ENCODE measurements at regions of chr17 and their contacts with region 1.

Region 1: GRCh38 chr17:76014184-76014924 is 12.8 kb downstream of the EVPL start:
- DNase-seq: peak; percentile 94
- H3K4me3 Mint-ChIP-seq: no peak overlapping the region
- H3K27ac Mint-ChIP-seq: no peak overlapping the region
- H3K4me1 Mint-ChIP-seq: peaks cover 4% of the 10 kb centered on the region
- H3K27me3 Mint-ChIP-seq: no peaks in the 10 kb centered on the region

Region 2: GRCh38 chr17:76103274-76104139 is 89.2 kb after region 1 on chr17 and contains the start of gene EXOC7:
- intact Hi-C with region 1: loop called (anchors 1 kb)
- DNase-seq: peak; percentile 99
- H3K4me3 Mint-ChIP-seq: peak within 1 kb of the TSS; percentile 99
- H3K27ac Mint-ChIP-seq: peak within 1 kb of the TSS; percentile 97
- H3K4me1 Mint-ChIP-seq: peaks cover 20% of the 10 kb centered on the region
- H3K27me3 Mint-ChIP-seq: no peaks in the 10 kb centered on the region
- total RNA-seq, gene EXOC7: 104 and 108 TPM in 2 replicates

Region 3: GRCh38 chr17:76296186-76296585 is 281.8 kb after region 1 on chr17:
- intact Hi-C with region 1: loop called (anchors 2 kb)
- DNase-seq: no peak
- H3K4me3 Mint-ChIP-seq: no peak overlapping the region
- H3K27ac Mint-ChIP-seq: no peak overlapping the region
- H3K4me1 Mint-ChIP-seq: peaks cover 2% of the 10 kb centered on the region
- H3K27me3 Mint-ChIP-seq: no peaks in the 10 kb centered on the region

Measured in activated CD4-positive, alpha-beta T cell treated with anti-CD3 and anti-CD28 coated beads, Interleukin-2, amount 10 ng/mL, durations not matched to agents 24 days and 14 days (primary cell).